ENCODE measurements at regions of chr1 and their contacts with region 1.

Region 1: GRCh38 chr1:99801584-99801983 is 35.1 kb upstream of the FRRS1 start:
- DNase-seq: no peak
- H3K4me3 ChIP-seq: no peak overlapping the region
- H3K27ac ChIP-seq: no peak overlapping the region
- H3K4me1 ChIP-seq: no peaks in the 10 kb centered on the region
- H3K27me3 ChIP-seq: no peaks in the 10 kb centered on the region
- CTCF ChIP-seq: no peak
- EP300 ChIP-seq: no peak
- POLR2A ChIP-seq: no peak

Region 2: GRCh38 chr1:99704356-99704816 is 97.2 kb before region 1 on chr1:
- intact Hi-C with region 1: no loop called
- DNase-seq: no peak
- H3K4me3 ChIP-seq: no peak overlapping the region
- H3K27ac ChIP-seq: no peak overlapping the region
- H3K4me1 ChIP-seq: peaks cover 0 to 6% (median 3%) of the 10 kb centered on the region in 4 donors
- H3K27me3 ChIP-seq: no peaks in the 10 kb centered on the region
- CTCF ChIP-seq: no peak
- EP300 ChIP-seq: no peak
- POLR2A ChIP-seq: no peak

Region 3: GRCh38 chr1:100443811-100444571 is 642.4 kb after region 1 on chr1:
- intact Hi-C with region 1: loop called (anchors 5 kb)
- DNase-seq: no peak
- H3K4me3 ChIP-seq: no peak overlapping the region
- H3K27ac ChIP-seq: peak overlapping the region in 2 of 4 donors; percentile 27 to 60
- H3K4me1 ChIP-seq: peaks cover 2 to 12% (median 7%) of the 10 kb centered on the region in 4 donors
- H3K27me3 ChIP-seq: no peaks in the 10 kb centered on the region
- CTCF ChIP-seq: no peak
- EP300 ChIP-seq: no peak
- POLR2A ChIP-seq: no peak

Measured in esophagus muscularis mucosa (tissue), 4 donors.